PC-9 (cell line): ENCODE measurements at regions of chr3 and their contacts with region 1.

Region 1: GRCh38 chr3:18295171-18295920 is 129.8 kb downstream of the SATB1 start:
- DNase-seq: peak; percentile 86 to 90
- H3K4me3 ChIP-seq: no peak overlapping the region
- H3K27ac ChIP-seq: peak overlapping the region; percentile 11; the same call in 1 of the 2 replicates
- H3K4me1 ChIP-seq: peaks cover 9% of the 10 kb centered on the region
- H3K27me3 ChIP-seq: no peaks in the 10 kb centered on the region
- CTCF ChIP-seq: peak; percentile 89

Region 2: GRCh38 chr3:17639765-17640164 is 655.6 kb before region 1 on chr3:
- CTCF ChIA-PET with region 1: no interaction called
- POLR2A ChIA-PET with region 1: interaction called, 7 read pairs
- intact Hi-C with region 1: loop called (anchors 1 kb)
- DNase-seq: peak; percentile 51 to 53
- H3K4me3 ChIP-seq: no peak overlapping the region
- H3K27ac ChIP-seq: peak overlapping the region; percentile 91
- H3K4me1 ChIP-seq: peaks cover 39% of the 10 kb centered on the region
- H3K27me3 ChIP-seq: no peaks in the 10 kb centered on the region
- CTCF ChIP-seq: no peak

Region 3: DNA sequence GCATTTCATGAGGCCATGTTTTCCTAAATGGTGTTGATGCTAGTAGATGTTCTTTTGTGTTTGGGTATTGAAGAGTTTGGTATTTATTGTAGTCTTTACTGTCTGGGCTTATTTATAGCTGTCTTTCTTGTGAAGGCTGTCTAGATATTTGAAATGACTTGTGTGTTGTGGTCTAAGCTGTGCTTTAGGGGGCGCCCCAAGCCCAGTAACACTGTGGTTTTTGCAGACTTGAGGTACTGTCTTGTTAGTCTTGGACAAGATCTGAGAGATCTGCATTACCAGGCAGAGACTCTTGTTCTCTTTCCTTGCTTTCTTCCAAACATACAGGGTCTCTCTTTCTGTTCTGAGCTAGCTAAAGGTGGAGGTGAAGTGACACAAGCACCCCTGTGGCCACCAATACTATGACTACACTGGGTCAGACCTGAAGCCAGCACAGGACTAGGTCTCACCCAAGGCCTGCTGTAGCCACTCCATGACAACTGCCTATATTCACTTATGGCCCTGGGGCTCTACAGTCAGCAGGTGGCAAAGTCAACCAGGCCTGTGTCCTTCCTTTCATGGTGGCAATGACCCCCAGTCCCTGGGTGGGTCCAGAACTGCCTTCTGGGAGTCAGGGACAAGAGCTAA is 400.8 kb before region 1 on chr3:
- CTCF ChIA-PET with region 1: interaction called, 7 read pairs
- POLR2A ChIA-PET with region 1: no interaction called
- intact Hi-C with region 1: loop called (anchors 1 kb)
- DNase-seq: peak in 1 of 2 experiments; percentile 42
- H3K4me3 ChIP-seq: no peak overlapping the region
- H3K27ac ChIP-seq: no peak overlapping the region
- H3K4me1 ChIP-seq: no peaks in the 10 kb centered on the region
- H3K27me3 ChIP-seq: no peaks in the 10 kb centered on the region
- CTCF ChIP-seq: peak; percentile 70

Region 4: DNA sequence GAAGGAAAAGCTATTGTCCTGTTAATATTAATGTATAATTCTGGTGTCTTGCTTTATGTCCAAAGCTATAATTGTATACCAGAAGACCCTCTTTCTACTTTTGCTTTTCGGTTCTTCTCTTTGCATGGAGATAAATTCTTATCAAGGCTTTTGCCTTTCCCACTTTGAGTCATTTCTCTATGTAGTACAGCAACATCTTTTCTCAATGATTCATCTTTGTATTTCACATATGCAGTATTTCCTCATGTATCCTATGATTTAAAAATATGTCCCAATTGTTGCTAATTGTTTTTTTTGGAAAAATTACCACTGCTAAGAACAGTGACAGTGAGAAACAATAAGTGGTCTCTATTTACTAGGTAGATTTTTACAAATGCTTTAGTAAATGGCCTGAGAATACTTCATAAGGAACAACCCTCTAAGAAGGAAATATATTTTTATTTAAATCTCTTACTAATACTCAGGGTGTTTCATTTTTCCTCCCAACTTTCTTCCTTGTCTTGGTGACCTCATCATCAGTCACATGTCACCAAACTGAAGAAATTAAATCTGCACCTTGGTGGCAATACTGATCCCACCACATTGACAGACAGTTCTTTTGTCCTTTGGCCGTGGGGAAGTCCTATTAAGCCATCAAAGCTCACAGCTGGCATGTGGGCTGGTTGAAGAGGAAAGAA is 160.8 kb before region 1 on chr3:
- CTCF ChIA-PET with region 1: no interaction called
- POLR2A ChIA-PET with region 1: no interaction called
- intact Hi-C with region 1: loop called (anchors 10 kb)
- DNase-seq: peak; percentile 18 to 78
- H3K4me3 ChIP-seq: no peak overlapping the region
- H3K27ac ChIP-seq: peak overlapping the region; percentile 90
- H3K4me1 ChIP-seq: peaks cover 29% of the 10 kb centered on the region
- H3K27me3 ChIP-seq: no peaks in the 10 kb centered on the region
- CTCF ChIP-seq: no peak

Region 5: GRCh38 chr3:18245721-18246120 is 49.6 kb before region 1 on chr3:
- CTCF ChIA-PET with region 1: no interaction called
- POLR2A ChIA-PET with region 1: no interaction called
- intact Hi-C with region 1: no loop called
- DNase-seq: no peak
- H3K4me3 ChIP-seq: no peak overlapping the region
- H3K27ac ChIP-seq: no peak overlapping the region
- H3K4me1 ChIP-seq: no peaks in the 10 kb centered on the region
- H3K27me3 ChIP-seq: no peaks in the 10 kb centered on the region
- CTCF ChIP-seq: no peak

Region 6: GRCh38 chr3:18389108-18389733 is 93.9 kb after region 1 on chr3:
- CTCF ChIA-PET with region 1: no interaction called
- POLR2A ChIA-PET with region 1: interaction called, 3 read pairs
- intact Hi-C with region 1: loop called (anchors 1 kb)
- DNase-seq: peak in 1 of 2 experiments; percentile 7
- H3K4me3 ChIP-seq: no peak overlapping the region
- H3K27ac ChIP-seq: no peak overlapping the region
- H3K4me1 ChIP-seq: no peaks in the 10 kb centered on the region
- H3K27me3 ChIP-seq: no peaks in the 10 kb centered on the region
- CTCF ChIP-seq: peak; percentile 83

Region 7: DNA sequence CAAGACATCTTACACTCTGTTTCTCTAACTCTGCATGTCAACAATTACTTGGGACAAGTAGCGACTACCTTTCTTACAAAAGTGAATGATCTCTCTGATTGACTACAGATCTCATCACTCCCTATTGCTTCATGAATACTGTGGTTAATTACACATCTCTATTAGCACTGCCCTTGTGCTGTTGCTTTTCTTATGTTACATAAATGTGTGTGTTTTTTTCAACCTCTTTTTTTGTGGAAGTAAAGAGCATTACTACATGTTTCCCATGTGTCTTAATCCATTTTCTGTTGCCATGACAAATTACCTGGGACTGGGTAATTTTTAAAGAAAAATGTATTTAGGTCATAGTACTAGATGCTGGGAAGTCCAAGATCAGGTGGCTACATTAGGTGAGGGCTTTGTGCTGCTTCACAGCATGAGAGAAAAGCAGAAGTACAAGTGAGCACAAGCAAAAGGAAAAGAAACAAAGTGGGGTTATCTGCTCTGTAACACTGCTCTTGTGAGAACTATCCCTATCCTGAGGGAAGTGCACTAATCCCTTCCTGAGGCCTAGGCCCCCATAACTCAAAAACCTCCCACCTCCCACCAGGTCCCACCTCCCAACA is 428.0 kb after region 1 on chr3:
- CTCF ChIA-PET with region 1: no interaction called
- POLR2A ChIA-PET with region 1: no interaction called
- intact Hi-C with region 1: no loop called
- DNase-seq: no peak
- H3K4me3 ChIP-seq: no peak overlapping the region
- H3K27ac ChIP-seq: no peak overlapping the region
- H3K4me1 ChIP-seq: no peaks in the 10 kb centered on the region
- H3K27me3 ChIP-seq: no peaks in the 10 kb centered on the region
- CTCF ChIP-seq: no peak